Vagina (tissue), 2 donors: ENCODE measurements at regions of chr11 and their contacts with region 1.

Region 1: DNA sequence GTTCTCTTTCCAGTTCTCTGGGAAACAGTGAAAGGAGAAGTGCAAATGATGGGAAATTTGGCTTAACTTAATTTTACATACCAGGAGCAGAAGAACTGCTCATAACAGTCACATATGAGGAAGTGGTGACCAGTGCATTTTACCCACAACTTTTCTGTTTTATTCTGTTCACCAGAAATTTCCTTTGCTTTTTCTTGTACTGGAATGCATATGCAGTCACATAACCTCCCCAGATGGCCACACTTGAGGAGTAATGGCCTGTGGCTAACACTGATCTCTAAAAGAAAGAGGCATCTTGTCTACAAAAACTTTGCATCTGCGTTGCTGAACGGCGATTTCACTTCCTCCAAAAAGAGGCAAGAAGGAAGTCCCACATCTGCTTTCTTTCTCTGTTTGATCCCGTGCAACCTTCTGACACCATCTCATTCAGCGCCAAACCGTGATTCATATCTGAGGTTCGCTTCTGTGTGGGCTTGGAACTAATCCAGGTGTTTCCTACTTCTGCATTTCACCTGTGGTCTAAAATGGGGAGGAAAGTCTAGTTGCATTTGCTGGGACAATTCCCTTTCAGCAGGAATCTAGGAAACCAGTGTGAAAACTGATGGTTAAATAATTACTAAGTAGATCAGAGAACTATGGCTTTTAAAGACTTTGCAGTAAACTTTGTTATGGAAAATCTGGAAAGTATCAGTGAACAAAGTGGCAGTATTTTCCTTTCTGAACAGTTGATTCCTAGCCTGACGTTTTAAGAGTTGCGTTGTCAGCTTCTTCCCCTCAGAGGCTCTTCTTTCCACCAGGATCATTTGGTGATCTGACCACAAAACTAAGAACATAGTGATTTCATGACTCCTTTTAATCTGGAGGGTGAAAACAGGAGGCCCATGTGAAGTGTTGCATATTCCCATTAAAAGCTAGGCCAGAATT is 4.2 kb upstream of the MPEG1 start:
- DNase-seq: no peak
- H3K4me3 ChIP-seq: no peak overlapping the region
- H3K27ac ChIP-seq: peak overlapping the region; percentile 39
- H3K4me1 ChIP-seq: peaks cover 9% of the 10 kb centered on the region
- H3K27me3 ChIP-seq: no peaks in the 10 kb centered on the region
- CTCF ChIP-seq: no peak
- POLR2A ChIP-seq: no peak

Region 2: DNA sequence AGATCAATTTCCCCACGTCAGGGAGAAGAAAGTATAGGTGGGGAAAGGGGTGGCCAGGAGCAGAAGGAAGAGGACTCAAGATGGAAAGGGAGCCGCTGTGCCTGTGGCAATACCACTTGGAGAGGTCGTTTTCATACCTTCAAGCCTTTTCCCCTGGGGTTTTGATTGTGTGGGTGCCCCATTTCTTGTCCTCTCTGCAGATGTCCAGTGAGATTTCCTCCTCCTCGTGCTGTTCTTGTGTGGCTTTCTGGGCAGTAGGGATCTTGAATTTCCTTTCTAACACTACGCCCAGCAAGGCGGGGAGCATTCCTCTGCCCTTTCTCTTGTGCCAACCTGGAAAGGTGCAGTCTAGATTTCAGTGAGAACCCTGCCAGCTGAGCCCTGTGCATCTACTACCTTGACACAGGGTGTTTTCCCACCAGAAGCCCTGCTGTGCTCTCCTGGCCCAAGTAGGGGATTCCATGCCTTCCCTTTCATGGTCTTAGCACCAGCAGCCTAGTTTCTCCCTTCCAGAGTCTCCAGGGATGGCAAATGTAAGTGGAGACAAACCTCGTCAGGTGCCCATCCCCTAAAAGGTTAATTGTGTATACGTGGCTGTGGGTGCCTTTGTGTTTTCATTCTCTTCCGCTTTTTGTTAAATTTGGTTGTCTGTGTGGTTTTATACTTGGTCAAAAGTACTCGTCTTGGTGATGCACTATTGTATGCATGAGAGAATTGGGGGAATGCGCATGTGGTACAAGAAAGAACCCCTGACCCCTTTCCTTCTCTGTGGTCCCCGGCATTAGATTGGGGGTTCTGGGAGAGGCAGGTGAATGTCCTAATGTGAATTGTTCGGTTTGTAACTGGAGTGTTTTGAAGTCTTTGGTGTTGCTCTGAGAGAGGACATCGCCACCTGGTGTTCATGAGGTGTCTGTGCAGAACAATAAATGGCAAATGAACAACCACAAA is 67.2 kb after region 1 on chr11:
- intact Hi-C with region 1: loop called (anchors 10 kb)
- DNase-seq: peak in 1 of 2 donors; percentile 34
- H3K4me3 ChIP-seq: no peak overlapping the region
- H3K27ac ChIP-seq: no peak overlapping the region
- H3K4me1 ChIP-seq: no peaks in the 10 kb centered on the region
- H3K27me3 ChIP-seq: no peaks in the 10 kb centered on the region
- CTCF ChIP-seq: peak; percentile 56 to 66 (median 59)
- POLR2A ChIP-seq: no peak